SK-N-SH (cell line): ENCODE measurements at regions of chr3 and their contacts with region 1.

Region 1: DNA sequence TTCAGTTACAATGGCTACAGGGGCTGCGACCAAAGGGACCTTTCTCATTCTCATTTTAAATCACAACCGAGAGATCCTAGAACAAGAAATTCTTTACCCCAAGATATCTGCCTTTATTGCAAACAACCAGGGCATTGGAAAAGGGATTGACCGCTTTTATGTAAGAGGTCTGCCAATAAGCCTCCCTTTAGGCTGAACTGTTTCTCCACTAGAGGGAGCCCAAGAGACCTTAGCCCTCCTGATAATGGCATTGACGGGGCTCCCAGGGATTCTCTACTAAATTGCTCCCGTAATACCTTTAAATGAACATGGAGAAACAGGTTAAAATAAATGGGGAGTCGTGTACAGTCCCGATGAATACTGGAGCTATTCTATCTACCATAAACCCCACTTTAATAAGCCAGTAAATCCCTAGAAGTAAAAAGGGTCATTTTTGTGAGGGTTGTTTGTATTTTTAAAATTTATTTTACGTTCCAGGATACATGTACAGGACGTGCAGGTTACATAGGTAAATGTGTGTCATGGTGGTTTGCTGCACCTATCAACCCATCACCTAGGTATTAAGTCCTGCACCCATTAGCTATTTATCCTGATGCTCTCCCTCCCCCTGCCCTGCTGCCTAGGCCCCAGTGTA is 7.5 kb upstream of the IGSF10 start:
- DNase-seq: peak; percentile 58
- H3K4me3 ChIP-seq: peak overlapping the region in 1 of 2 experiments; percentile 24; a peak in 1 of 4 replicates
- H3K27ac ChIP-seq: no peak overlapping the region
- H3K4me1 ChIP-seq: no peaks in the 10 kb centered on the region
- H3K27me3 ChIP-seq: no peaks in the 10 kb centered on the region
- CTCF ChIP-seq: peak; percentile 90
- EP300 ChIP-seq: no peak
- RAD21 ChIP-seq: peak; percentile 70

Region 2: DNA sequence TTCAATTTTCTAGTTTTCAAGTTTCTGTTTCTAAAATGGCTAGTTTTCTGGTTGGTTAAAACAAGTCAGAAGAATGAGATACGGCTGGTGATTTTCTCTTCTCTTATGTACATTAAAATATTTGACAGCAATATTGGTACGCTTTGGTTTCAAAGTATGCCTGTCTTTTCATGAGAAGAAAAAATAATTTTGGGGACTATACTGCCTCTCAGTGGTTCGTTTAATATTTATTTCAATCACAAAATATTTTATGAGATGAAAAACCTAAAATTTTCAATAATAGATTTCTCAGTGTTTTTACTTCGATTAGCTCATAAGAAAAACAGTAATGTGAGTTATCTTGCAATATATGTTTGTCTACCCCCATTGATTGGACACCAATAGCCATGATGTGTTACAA is 192.5 kb after region 1 on chr3:
- CTCF ChIA-PET with region 1: interaction called, 12 read pairs
- POLR2A ChIA-PET with region 1: no interaction called
- DNase-seq: peak; percentile 4
- H3K4me3 ChIP-seq: no peak overlapping the region
- H3K27ac ChIP-seq: no peak overlapping the region
- H3K4me1 ChIP-seq: peaks cover 0 to 9% of the 10 kb centered on the region in 2 experiments; a peak in 2 of 4 replicates
- H3K27me3 ChIP-seq: no peaks in the 10 kb centered on the region
- CTCF ChIP-seq: peak; percentile 50
- EP300 ChIP-seq: no peak
- RAD21 ChIP-seq: peak; percentile 55; the same call in 1 of the 2 replicates

Region 3: DNA sequence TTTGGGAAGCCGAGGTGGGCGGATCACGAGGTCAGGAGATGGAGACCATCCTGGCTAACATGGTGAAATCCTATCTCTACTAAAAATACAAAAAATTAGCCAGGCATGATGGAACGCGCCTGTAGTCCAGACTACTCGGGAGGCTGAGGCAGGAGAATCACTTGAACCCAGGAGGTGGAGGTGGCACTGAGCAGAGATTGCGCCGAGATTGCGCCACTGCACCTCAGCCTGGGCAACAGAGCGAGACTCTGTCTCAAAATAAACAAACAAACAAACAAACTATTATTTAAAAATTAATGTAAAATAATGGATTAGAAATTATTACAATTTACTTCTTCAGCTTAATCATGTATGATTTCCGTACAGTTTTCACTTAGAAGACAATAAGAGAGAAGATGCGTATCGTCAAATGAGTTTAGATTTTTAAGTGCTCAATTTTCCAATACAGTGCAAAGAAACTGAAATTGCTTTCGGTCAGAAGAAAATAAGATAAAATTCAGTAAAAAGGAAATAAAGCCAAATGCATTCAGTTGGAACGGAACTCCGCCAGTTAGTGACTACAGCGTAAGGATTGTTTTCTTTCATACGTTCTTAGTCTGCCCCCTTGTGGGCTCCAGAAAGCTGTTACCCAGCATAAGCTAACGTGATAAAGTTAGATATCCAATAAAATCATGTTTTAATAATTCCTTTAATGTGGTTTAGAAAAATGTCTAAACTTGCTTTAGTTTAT is 370.3 kb after region 1 on chr3:
- CTCF ChIA-PET with region 1: interaction called, 27 read pairs
- POLR2A ChIA-PET with region 1: no interaction called
- DNase-seq: peak; percentile 31
- H3K4me3 ChIP-seq: peak overlapping the region in 1 of 2 experiments; percentile 45; a peak in 1 of 4 replicates
- H3K27ac ChIP-seq: peak overlapping the region in 1 of 2 experiments; percentile 84; a peak in 2 of 4 replicates
- H3K4me1 ChIP-seq: peaks cover 0 to 26% of the 10 kb centered on the region in 2 experiments
- H3K27me3 ChIP-seq: no peaks in the 10 kb centered on the region
- CTCF ChIP-seq: peak; percentile 90
- EP300 ChIP-seq: no peak
- RAD21 ChIP-seq: peak; percentile 89